ENCODE measurements at regions of chr3 and their contacts with region 1.

Region 1: DNA sequence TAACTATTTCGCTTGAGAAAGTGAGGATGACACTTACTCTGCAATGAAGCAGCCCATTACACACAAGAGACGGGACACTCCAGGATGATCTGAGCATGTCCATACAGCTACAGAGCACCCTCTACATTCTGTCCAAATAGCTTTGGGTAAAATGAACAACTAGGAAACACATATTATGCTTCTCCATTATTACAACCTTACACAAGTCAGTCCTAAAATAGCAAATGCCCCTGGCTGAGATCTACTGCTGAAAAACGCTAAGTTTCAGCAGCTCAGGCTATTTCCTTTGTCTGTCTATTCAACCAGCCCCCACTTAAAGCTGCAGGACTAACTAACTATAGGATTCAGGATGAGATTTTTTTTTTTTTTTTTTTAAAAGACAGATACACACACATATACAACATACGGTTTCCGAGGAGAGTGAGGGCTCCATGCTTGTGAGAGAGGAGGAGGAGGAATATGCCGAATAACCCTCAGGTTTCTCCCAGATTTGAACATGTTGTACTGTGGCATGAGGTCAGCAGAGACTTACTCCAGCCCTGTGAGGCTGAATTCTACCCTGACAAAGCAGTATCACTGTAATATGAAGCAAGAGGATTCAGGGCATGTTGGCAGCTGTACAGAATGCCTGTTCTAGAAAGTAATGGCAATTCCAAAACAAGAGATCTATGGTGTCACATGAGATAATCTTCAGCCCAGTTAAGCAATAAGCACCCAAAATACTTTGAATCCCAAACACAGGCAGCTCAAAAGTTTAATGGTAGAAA is 117.3 kb upstream of the PLXND1 start:
- DNase-seq: peak in 1 of 2 donors; percentile 26
- ATAC-seq: peak; percentile 79 to 97 (median 89)
- H3K4me3 ChIP-seq: peak overlapping the region in 7 of 10 donors; percentile 1 to 38 (median 26)
- H3K27ac ChIP-seq: peak overlapping the region in 9 of 10 donors; percentile 4 to 68 (median 46)
- H3K4me1 ChIP-seq: peaks cover 0 to 29% (median 20%) of the 10 kb centered on the region in 9 donors
- H3K27me3 ChIP-seq: no peaks in the 10 kb centered on the region
- CTCF ChIP-seq: no peak

Region 2: GRCh38 chr3:129650256-129650872 is 73.4 kb before region 1 on chr3:
- intact Hi-C with region 1: loop called in 2 of 10 experiments (anchors 5 to 10 kb)
- DNase-seq: peak in 1 of 2 donors; percentile 73
- ATAC-seq: peak in 7 of 8 donors; percentile 64 to 92 (median 73)
- H3K4me3 ChIP-seq: no peak overlapping the region
- H3K27ac ChIP-seq: no peak overlapping the region
- H3K4me1 ChIP-seq: peaks cover 0 to 30% (median 21%) of the 10 kb centered on the region in 9 donors
- H3K27me3 ChIP-seq: no peaks in the 10 kb centered on the region
- CTCF ChIP-seq: peak; percentile 51 to 84 (median 73)

Region 3: DNA sequence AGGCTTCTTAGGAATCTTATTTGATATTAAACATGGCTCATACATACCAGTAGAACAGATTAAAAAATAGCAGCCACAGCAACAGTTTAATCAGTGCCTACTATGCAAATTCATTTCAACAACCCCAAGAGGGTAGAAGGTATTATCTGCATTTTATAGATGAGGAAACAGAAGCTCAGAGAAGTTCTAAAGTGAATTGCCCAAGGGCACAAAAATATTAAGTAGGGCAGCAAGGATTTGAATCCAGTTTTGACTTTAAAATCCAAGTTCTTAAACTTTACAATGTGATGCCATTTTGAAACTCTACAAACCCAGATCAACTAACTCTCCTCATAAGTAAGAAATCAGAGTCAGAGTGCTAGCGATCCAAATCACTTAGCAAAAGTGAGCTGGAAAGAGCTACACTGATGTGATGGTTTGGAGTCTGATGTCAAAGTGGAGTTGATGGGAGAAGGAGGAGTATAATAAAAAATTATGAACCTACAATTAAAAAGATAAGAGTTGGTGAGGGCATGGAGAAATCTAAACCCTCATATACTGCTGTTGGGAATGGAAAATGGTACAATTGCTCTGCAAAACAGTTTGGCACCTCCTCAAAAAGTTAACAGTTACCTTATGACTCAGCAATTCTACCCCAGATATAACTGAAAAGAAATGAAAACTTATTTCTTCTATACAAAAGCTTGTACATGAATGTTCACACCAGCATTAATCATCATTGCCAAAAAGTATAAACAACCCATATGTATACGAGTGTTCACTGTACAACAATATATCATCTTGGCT is 66.3 kb before region 1 on chr3:
- intact Hi-C with region 1: loop called in 2 of 10 experiments (anchors 5 to 10 kb)
- DNase-seq: no peak
- ATAC-seq: no peak
- H3K4me3 ChIP-seq: no peak overlapping the region
- H3K27ac ChIP-seq: peak overlapping the region in 5 of 10 donors; percentile 19 to 73 (median 24)
- H3K4me1 ChIP-seq: peaks cover 0 to 54% (median 34%) of the 10 kb centered on the region in 9 donors
- H3K27me3 ChIP-seq: no peaks in the 10 kb centered on the region
- CTCF ChIP-seq: no peak

Region 4: DNA sequence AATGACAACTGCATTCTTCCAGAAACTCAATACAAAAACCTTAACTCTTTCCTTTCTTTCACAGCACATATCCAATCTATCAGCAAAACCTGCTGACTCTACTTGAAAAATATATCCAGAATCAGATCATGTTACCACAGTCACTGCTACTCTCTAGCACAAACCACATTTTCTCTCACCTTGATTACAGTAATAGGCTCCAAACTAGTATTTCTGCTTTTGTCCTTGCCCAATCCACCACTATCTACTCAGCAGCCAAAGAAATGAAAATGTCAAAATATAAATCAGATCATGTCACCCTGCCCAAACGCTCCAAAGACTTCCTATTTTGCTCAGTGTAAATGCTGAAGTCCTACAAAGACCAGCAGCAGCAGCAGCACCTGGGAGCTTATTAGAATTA is 154.6 kb after region 1 on chr3:
- intact Hi-C with region 1: no loop called
- DNase-seq: no peak
- ATAC-seq: no peak
- H3K4me3 ChIP-seq: no peak overlapping the region
- H3K27ac ChIP-seq: no peak overlapping the region
- H3K4me1 ChIP-seq: no peaks in the 10 kb centered on the region
- H3K27me3 ChIP-seq: no peaks in the 10 kb centered on the region
- CTCF ChIP-seq: no peak